ENCODE measurements at regions of chr14 and their contacts with region 1.

Region 1: DNA sequence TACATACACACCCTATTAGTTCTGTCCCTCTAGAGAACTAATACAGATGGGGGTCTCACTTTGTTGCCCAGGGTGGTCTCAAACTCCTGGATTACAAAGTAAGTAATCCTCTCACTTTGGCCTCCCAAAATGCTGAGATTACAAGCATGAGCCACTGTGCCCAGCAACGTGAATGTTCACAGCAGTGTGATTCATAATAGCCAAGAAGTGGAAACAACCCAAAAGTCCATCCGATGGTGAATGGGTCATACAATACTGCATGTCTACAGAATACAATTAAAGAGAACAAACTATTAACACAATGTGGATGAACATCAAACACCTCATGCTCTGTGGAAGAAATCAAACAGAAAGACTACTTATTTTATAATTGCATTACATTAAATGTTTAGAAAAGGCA is 57.3 kb upstream of the SYNE2 start:
- DNase-seq: no peak
- ATAC-seq: no peak
- H3K4me3 Mint-ChIP-seq: no peak overlapping the region
- H3K27ac Mint-ChIP-seq: no peak overlapping the region
- H3K4me1 Mint-ChIP-seq: peaks cover 3% of the 10 kb centered on the region
- H3K27me3 Mint-ChIP-seq: no peaks in the 10 kb centered on the region
- CTCF ChIP-seq: no peak

Region 2: DNA sequence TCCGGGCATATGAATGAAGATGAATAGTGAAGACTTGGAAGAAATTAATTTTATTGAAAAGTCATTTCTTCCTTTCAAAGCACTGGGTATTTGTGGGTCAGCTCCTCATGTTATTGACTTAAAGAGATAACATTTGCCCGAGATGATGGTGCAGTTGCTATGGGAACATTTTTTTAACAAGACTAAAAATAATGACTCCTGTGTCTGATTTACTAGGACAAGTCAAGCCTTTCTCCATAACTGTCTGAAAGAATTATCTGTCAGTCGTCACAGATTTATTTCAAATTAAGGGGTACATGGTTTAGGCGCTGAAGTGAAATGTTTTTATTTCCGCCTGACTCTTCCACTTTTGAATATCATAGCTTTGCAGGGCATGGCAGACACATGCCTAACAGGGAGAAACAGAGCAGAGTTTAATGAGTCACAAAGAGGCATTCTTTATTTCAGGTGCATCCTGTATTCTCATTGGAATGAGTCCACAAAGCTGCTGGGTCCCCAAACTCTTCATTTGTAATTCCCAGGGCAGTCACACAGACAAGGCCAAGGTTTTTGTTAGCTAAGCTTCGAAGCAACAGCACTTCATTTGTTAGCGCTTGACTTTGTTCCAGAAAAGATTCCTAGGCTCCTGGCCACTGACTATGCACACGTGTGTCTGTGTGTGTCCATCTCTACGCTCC is 472.5 kb before region 1 on chr14:
- CTCF ChIA-PET with region 1: no interaction called
- POLR2A ChIA-PET with region 1: no interaction called
- intact Hi-C with region 1: no loop called
- DNase-seq: no peak
- ATAC-seq: no peak
- H3K4me3 Mint-ChIP-seq: no peak overlapping the region
- H3K27ac Mint-ChIP-seq: no peak overlapping the region
- H3K4me1 Mint-ChIP-seq: no peaks in the 10 kb centered on the region
- H3K27me3 Mint-ChIP-seq: peaks cover 2% of the 10 kb centered on the region
- CTCF ChIP-seq: no peak

Region 3: GRCh38 chr14:63910583-63911363 is 115.2 kb after region 1 on chr14:
- CTCF ChIA-PET with region 1: no interaction called
- POLR2A ChIA-PET with region 1: no interaction called
- intact Hi-C with region 1: no loop called
- DNase-seq: no peak
- ATAC-seq: no peak
- H3K4me3 Mint-ChIP-seq: no peak overlapping the region
- H3K27ac Mint-ChIP-seq: no peak overlapping the region
- H3K4me1 Mint-ChIP-seq: peaks cover 9% of the 10 kb centered on the region
- H3K27me3 Mint-ChIP-seq: no peaks in the 10 kb centered on the region
- CTCF ChIP-seq: no peak

Region 4: GRCh38 chr14:64137657-64138290 is 342.2 kb after region 1 on chr14:
- CTCF ChIA-PET with region 1: no interaction called
- POLR2A ChIA-PET with region 1: no interaction called
- intact Hi-C with region 1: loop called (anchors 5 kb)
- DNase-seq: no peak
- ATAC-seq: no peak
- H3K4me3 Mint-ChIP-seq: no peak overlapping the region
- H3K27ac Mint-ChIP-seq: no peak overlapping the region
- H3K4me1 Mint-ChIP-seq: no peaks in the 10 kb centered on the region
- H3K27me3 Mint-ChIP-seq: no peaks in the 10 kb centered on the region
- CTCF ChIP-seq: no peak